ENCODE measurements at regions of chr1 and their contacts with region 1.

Region 1: DNA sequence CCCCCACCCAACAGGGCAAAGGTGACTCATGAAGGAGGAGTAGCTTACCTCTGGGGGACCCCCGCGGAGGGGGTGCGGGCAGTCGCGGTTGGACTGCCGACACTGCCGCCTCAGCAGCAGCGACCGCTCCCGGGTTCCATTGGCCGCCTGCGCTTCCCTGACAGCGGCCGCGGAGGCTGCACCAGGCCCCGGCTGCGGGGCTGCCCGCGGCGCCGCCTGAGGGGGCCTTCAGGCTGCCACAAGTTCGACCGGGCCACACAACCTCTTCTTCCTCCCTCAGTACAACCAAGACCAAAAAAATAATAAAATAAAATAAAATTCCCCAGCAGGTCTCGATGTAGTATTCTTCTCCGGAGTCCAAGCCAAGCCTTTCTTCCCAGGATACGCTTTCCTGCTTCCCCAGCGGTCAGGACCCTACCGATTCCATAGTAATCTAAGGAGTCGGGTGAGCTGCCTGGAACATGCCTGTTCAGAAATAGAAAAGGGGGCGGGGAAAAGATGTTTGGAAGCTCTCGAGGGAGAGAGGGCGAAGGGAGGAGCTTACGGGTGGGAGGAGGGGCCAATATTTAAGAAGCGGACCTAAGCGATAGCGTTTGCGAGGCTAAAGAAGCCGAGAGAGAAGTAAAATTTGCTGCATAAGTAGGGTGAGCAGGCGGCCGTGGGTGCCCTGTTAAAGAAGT is at the start of gene PI4KB:
- DNase-seq: peak; percentile 96
- H3K4me3 Mint-ChIP-seq: peak within 1 kb of the TSS; percentile 93
- H3K27ac Mint-ChIP-seq: peak within 1 kb of the TSS; percentile 96
- H3K4me1 Mint-ChIP-seq: peaks cover 35% of the 10 kb centered on the region
- H3K27me3 Mint-ChIP-seq: no peaks in the 10 kb centered on the region
- total RNA-seq, gene PI4KB: 64.1 to 69.2 TPM

Region 2: GRCh38 chr1:150322306-150322705 is 1005.1 kb before region 1 on chr1:
- CTCF ChIA-PET with region 1: no interaction called
- intact Hi-C with region 1: no loop called
- DNase-seq: peak; percentile 29
- H3K4me3 Mint-ChIP-seq: peak overlapping the region; percentile 99
- H3K27ac Mint-ChIP-seq: peak overlapping the region; percentile 99
- H3K4me1 Mint-ChIP-seq: peaks cover 37% of the 10 kb centered on the region
- H3K27me3 Mint-ChIP-seq: no peaks in the 10 kb centered on the region

Region 3: GRCh38 chr1:150876119-150876454 is 451.3 kb before region 1 on chr1:
- CTCF ChIA-PET with region 1: no interaction called
- intact Hi-C with region 1: loop called (anchors 5 kb)
- DNase-seq: peak; percentile 58
- H3K4me3 Mint-ChIP-seq: peak overlapping the region; percentile 83
- H3K27ac Mint-ChIP-seq: peak overlapping the region; percentile 83
- H3K4me1 Mint-ChIP-seq: peaks cover 18% of the 10 kb centered on the region
- H3K27me3 Mint-ChIP-seq: no peaks in the 10 kb centered on the region

Region 4: GRCh38 chr1:151198255-151199127 is 128.9 kb before region 1 on chr1 and contains the start of gene PIP5K1A:
- CTCF ChIA-PET with region 1: no interaction called
- intact Hi-C with region 1: loop called (anchors 5 kb)
- DNase-seq: peak; percentile 99
- H3K4me3 Mint-ChIP-seq: peak within 1 kb of the TSS; percentile 99
- H3K27ac Mint-ChIP-seq: peak within 1 kb of the TSS; percentile 99
- H3K4me1 Mint-ChIP-seq: peaks cover 39% of the 10 kb centered on the region
- H3K27me3 Mint-ChIP-seq: no peaks in the 10 kb centered on the region
- total RNA-seq, gene PIP5K1A: 72.6 to 82.5 TPM

Region 5: DNA sequence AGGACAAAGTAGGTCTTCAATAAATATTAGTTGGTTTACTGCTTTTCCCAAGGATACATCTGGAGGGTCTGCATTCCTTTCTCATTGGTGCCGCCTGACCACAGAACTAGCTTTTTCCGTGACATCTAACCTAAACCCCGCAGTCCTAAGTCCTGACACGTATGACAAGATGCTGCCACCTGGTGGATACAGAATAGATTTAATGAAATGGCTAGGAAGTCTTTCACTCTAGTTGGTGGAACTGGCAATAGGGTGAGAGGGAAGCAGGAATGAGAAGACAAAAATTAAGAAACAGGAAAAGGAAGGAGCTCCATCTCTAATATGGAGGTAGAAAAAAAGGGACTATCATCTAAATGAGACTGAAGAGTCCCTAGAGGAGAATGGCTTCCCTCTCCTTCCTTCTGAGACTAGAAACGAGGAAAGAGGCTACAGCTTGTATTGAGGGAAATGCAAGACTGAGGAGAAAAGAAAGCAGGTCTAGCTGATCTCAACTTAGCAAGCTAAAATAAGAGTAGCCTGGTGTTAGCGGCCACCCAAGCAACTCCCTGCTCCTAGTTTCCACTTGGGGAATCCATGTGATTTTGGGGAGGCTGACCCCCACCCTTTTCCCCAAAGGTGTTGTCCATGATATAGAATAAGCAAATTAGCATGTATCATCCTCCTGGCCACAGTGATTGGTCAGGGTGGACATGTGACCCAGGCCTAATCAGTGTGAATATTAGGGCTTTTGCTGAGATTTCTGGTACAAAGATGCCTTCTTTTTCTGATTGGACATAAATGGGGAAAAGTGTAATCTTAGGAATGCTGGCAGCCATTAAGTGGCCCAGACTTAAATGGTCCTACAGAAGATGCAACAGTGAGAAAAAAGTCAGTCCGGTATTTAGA is 13.7 kb after region 1 on chr1:
- CTCF ChIA-PET with region 1: interaction called, 49 read pairs
- intact Hi-C with region 1: loop called (anchors 1 kb)
- DNase-seq: peak; percentile 69
- H3K4me3 Mint-ChIP-seq: no peak overlapping the region
- H3K27ac Mint-ChIP-seq: peak overlapping the region; percentile 23
- H3K4me1 Mint-ChIP-seq: peaks cover 26% of the 10 kb centered on the region
- H3K27me3 Mint-ChIP-seq: no peaks in the 10 kb centered on the region

Region 6: DNA sequence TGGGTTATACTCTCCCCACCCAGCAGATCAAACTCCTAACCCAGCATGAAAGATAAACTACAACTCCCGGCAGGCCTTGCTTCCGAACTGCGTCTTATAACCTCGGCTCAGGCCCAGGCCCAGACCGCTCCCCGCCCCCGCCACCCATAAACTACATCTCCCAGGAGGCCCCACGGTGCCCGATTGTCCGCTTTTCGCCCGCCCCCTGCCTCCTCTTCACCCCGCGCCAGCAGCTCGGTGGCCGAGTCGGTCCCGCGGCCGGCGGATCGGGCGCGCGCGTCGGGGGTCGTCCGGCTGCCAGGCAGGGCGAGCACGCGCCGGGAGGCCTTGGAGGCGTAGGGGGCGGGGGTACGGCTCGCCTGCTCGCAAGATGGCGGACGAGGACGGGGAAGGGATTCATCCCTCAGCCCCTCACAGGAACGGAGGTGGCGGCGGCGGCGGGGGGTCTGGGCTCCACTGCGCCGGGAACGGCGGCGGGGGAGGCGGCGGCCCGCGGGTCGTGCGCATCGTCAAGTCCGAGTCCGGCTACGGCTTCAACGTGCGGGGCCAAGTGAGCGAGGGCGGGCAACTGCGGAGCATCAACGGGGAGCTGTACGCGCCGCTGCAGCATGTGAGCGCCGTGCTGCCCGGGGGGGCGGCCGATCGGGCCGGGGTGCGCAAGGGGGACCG is 284.6 kb after region 1 on chr1 and contains the start of gene SNX27:
- CTCF ChIA-PET with region 1: no interaction called
- intact Hi-C with region 1: no loop called
- DNase-seq: peak; percentile 94
- H3K4me3 Mint-ChIP-seq: peak within 1 kb of the TSS; percentile 93
- H3K27ac Mint-ChIP-seq: peak within 1 kb of the TSS; percentile 72
- H3K4me1 Mint-ChIP-seq: peaks cover 48% of the 10 kb centered on the region
- H3K27me3 Mint-ChIP-seq: peaks cover 3% of the 10 kb centered on the region
- total RNA-seq, gene SNX27: 22.9 to 23.6 TPM

Region 7: DNA sequence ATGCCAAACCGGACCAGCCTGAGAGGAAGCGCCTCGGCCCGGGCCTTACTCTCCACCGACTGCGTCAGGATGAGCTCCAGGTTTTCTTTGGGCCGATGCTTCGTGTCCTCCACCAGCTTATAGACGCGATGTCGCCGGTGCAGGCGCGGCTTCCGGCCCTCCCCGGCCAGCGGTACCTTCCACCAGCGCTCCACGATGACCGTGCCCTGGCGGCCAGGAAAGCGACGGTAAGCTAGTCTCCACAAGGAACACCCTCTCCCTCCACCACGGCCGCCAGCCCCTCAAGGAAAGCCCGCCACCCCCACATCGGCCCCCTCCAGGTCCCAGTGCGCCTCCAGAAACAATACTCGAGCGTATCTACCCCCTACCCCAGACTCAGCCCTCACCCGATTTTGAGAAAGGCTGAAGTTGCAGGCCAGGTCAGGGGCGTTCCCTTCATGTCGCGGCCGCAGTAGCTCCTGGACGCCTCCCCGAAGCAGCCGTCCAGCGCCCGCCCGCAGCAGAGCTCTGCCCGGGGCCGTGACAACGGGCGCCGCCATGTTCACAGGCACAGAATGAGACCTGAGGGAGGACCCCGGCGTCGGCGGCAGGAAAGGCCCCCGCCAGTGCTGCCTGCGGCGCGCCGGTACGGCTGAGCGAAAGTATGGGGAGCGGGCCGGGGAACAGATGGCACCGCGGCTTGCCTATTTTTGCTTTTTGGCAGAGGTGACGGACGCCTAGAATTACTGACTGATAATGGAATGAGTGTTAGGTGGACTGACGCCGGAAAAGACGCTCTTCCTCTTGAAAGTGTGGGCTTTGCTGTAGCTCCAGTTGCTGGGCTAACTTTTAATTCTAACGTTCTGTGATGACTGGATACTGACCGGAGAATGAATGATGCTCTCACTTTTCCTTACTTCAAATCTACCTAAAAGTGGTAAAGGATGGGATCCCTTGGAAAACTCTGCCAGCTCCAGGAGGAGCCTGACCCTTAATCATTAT is 435.9 kb after region 1 on chr1 and contains the start of gene MRPL9:
- CTCF ChIA-PET with region 1: no interaction called
- intact Hi-C with region 1: loop called (anchors 1 kb)
- DNase-seq: peak; percentile 91
- H3K4me3 Mint-ChIP-seq: peak within 1 kb of the TSS; percentile 86
- H3K27ac Mint-ChIP-seq: peak within 1 kb of the TSS; percentile 90
- H3K4me1 Mint-ChIP-seq: peaks cover 17% of the 10 kb centered on the region
- H3K27me3 Mint-ChIP-seq: no peaks in the 10 kb centered on the region
- total RNA-seq, gene MRPL9: 157 to 160 TPM

Measured in activated naive CD4-positive, alpha-beta T cell treated with anti-CD3 and anti-CD28 coated beads for 36 hours (primary cell).